ENCODE measurements at regions of chr12 and their contacts with region 1.

Region 1: GRCh38 chr12:57782608-57783465 is at the start of gene TSFM:
- DNase-seq: peak; percentile 85
- H3K4me3 ChIP-seq: peak within 1 kb of the TSS; percentile 82 to 93
- H3K27ac ChIP-seq: peak within 1 kb of the TSS in 1 of 2 experiments; percentile 65; a peak in 2 of 4 replicates
- H3K4me1 ChIP-seq: peaks cover 0 to 5% of the 10 kb centered on the region in 2 experiments; a peak in 1 of 4 replicates
- H3K27me3 ChIP-seq: no peaks in the 10 kb centered on the region
- CTCF ChIP-seq: peak; percentile 95
- EP300 ChIP-seq: no peak
- RAD21 ChIP-seq: peak; percentile 35; the same call in 1 of the 2 replicates
- polyA plus RNA-seq, gene TSFM: 23.0 and 28.7 TPM in 2 replicates

Region 2: DNA sequence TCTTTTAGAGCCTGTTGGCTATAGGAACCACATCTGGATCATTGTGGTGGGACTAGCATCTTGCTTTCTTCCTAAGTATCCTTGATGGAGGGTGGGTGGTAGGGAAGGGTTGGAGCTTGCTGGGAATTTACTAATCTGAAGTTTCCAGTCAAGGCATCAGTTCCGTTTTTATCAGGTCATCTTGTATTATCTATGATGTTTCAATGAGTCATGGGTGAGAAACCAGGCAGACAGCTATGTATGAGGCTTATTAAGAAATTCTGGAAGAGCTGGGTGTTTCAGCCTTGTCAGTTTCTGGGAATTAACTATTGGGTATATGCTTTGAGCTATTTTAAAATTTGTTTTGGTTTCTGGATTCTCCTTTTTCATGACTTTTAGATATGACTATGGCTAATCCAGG is 11.1 kb after region 1 on chr12:
- CTCF ChIA-PET with region 1: interaction called, 17 read pairs
- POLR2A ChIA-PET with region 1: no interaction called
- DNase-seq: no peak
- H3K4me3 ChIP-seq: no peak overlapping the region
- H3K27ac ChIP-seq: peak overlapping the region in 1 of 2 experiments; percentile 89; a peak in 2 of 4 replicates
- H3K4me1 ChIP-seq: peaks cover 0 to 6% of the 10 kb centered on the region in 2 experiments; a peak in 2 of 4 replicates
- H3K27me3 ChIP-seq: no peaks in the 10 kb centered on the region
- CTCF ChIP-seq: no peak
- EP300 ChIP-seq: no peak
- RAD21 ChIP-seq: no peak

Region 3: DNA sequence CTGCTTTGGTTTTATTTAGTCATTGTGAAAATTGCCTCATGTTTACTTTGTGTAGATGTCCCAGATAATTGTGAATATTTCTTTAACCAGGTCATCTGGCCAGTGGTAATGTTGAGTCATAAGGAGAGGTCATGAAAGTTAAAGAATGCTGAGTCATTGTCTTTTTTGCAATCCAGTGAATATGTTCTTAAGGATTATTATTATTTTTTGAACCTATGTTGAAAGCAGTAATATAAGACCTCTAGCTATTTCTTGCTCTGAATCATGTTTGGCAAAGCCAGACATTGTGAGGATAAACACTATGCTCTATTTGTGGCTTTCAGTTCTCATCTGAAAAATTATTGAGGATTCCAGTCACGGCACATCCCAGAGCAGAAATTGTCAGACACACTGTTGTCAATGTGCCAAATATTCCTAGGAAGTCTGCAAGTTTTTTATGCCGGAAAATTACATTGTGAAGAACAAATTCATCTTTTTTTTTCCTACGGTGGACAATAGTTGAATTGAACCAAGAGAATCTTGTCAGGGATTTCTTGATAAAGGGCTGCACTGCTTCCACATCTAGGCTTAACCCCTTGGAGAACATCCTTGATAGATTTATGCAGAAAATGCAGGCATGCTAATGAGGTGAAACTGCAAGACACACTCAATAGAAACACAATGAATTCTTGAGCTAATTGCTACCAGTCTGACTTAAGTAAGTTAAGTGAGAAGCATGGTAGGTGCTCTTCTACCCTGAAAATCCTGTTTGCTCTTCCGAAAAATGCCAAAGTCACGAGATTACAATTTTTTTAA is 528.2 kb after region 1 on chr12:
- CTCF ChIA-PET with region 1: no interaction called
- POLR2A ChIA-PET with region 1: no interaction called
- DNase-seq: no peak
- H3K4me3 ChIP-seq: no peak overlapping the region
- H3K27ac ChIP-seq: peak overlapping the region in 1 of 2 experiments; percentile 86; a peak in 2 of 4 replicates
- H3K4me1 ChIP-seq: peaks cover 0 to 19% of the 10 kb centered on the region in 2 experiments; a peak in 2 of 4 replicates
- H3K27me3 ChIP-seq: no peaks in the 10 kb centered on the region
- CTCF ChIP-seq: no peak
- EP300 ChIP-seq: peak in 1 of 2 experiments; percentile 77; a peak in 2 of 4 replicates
- RAD21 ChIP-seq: no peak